Right lobe of liver (tissue), 6 donors: ENCODE measurements at regions of chr17 and their contacts with region 1.

Region 1: GRCh38 chr17:4913994-4914393 is 11.1 kb upstream of the CHRNE start:
- DNase-seq: peak in 1 of 3 donors; percentile 62
- ATAC-seq: peak; percentile 50 to 64 (median 62)
- H3K4me3 ChIP-seq: no peak overlapping the region
- H3K27ac ChIP-seq: peak overlapping the region in 2 of 3 donors; percentile 17 to 37
- H3K4me1 ChIP-seq: peaks cover 0 to 20% (median 9%) of the 10 kb centered on the region in 4 donors
- H3K27me3 ChIP-seq: no peaks in the 10 kb centered on the region
- CTCF ChIP-seq: peak in 1 of 4 donors; percentile 5
- POLR2A ChIP-seq: no peak

Region 2: GRCh38 chr17:4969551-4970173 is 55.7 kb after region 1 on chr17:
- intact Hi-C with region 1: loop called in 1 of 2 experiments (anchors 10 kb)
- DNase-seq: peak in 2 of 3 donors; percentile 76 to 82
- ATAC-seq: peak in 2 of 4 donors; percentile 1 to 5
- H3K4me3 ChIP-seq: peak overlapping the region in 2 of 3 donors; percentile 65 to 78
- H3K27ac ChIP-seq: peak overlapping the region; percentile 54 to 87 (median 59)
- H3K4me1 ChIP-seq: peaks cover 0 to 24% (median 12%) of the 10 kb centered on the region in 4 donors
- H3K27me3 ChIP-seq: no peaks in the 10 kb centered on the region
- CTCF ChIP-seq: no peak
- POLR2A ChIP-seq: no peak